ENCODE measurements at regions of chr3 and their contacts with region 1.

Region 1: DNA sequence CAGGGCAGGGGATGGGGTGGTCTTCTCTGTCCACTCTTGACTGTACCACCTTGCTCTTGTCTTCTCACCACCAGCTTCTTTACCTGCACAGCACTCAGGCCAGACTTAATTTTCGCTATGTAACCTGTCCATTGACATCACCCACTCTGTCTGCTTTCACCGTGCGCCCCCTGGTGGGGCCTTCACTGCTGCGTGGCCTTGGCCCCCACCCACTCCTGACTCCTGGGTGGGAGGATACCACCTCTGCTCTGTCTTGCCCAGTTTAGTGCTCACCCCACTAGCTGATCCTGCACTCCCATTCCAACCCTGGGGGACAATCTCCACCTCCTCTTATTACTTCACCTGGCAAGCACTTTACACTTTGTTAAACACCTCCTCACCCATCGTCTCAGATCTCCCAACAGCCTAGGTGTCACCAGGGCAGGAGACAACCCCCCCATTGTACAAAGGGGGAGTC is 17.7 kb downstream of the PTH1R start:
- DNase-seq: peak; percentile 78 to 94 (median 92)
- ATAC-seq: peak; percentile 20 to 33
- H3K4me3 ChIP-seq: no peak overlapping the region
- H3K27ac ChIP-seq: no peak overlapping the region
- H3K4me1 ChIP-seq: peaks cover 14% of the 10 kb centered on the region
- H3K27me3 ChIP-seq: no peaks in the 10 kb centered on the region

Region 2: GRCh38 chr3:46578973-46579755 is 316.1 kb before region 1 on chr3:
- intact Hi-C with region 1: no loop called
- DNase-seq: no peak
- ATAC-seq: peak; percentile 43 to 79
- H3K4me3 ChIP-seq: no peak overlapping the region
- H3K27ac ChIP-seq: no peak overlapping the region
- H3K4me1 ChIP-seq: no peaks in the 10 kb centered on the region
- H3K27me3 ChIP-seq: no peaks in the 10 kb centered on the region

Region 3: GRCh38 chr3:46845791-46846623 is 49.2 kb before region 1 on chr3:
- intact Hi-C with region 1: loop called in 1 of 4 experiments (anchors 5 kb)
- DNase-seq: peak; percentile 84 to 94 (median 93)
- ATAC-seq: peak; percentile 78 to 84
- H3K4me3 ChIP-seq: peak overlapping the region; percentile 38
- H3K27ac ChIP-seq: peak overlapping the region; percentile 22
- H3K4me1 ChIP-seq: no peaks in the 10 kb centered on the region
- H3K27me3 ChIP-seq: no peaks in the 10 kb centered on the region

Region 4: GRCh38 chr3:46860017-46860830 is 35.0 kb before region 1 on chr3:
- intact Hi-C with region 1: loop called in 2 of 4 experiments (anchors 5 kb)
- DNase-seq: peak; percentile 17 to 68 (median 58)
- ATAC-seq: no peak
- H3K4me3 ChIP-seq: no peak overlapping the region
- H3K27ac ChIP-seq: peak overlapping the region; percentile 25
- H3K4me1 ChIP-seq: peaks cover 4% of the 10 kb centered on the region
- H3K27me3 ChIP-seq: no peaks in the 10 kb centered on the region

Region 5: DNA sequence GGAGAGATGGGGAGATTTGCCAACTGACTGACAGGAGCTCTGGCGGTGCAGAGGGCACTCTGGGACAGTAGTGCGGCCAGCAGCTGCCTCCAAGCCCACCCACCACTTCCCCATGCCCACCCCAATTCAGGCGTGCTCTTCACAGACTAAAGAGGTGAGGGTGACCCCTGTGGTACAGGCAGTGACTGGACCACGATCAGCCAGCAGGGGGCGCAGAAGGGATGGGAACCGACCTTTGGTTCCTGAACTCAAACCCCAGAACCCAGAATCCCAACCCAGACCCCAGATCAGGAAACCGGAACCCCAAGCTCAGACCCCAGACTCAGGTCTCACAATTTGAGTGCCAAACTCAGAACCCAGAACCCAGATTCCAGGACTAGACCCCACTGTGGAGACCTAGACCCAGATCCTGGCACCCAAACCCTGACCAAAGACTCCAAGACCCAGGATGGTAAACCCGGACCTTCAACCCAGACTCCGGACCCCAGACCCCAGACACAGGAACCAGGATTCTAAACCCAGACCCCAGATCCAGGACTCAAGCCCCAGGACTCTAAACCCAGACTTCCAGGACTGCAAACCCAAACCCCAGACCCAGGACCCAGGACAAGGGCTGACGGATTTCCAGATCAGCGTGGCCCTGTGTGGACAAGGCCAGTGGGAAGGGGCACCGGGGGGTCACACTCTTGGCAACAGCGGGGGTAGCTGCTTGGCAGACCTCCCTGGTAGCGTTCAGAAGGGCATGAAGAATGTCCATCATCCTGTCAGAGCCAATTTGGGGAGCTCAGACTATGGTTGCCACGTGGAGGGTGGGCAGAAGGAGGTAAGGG is 28.3 kb before region 1 on chr3:
- intact Hi-C with region 1: loop called in 3 of 4 experiments (anchors 2 to 5 kb)
- DNase-seq: peak; percentile 89 to 97 (median 96)
- ATAC-seq: peak; percentile 32 to 67
- H3K4me3 ChIP-seq: no peak overlapping the region
- H3K27ac ChIP-seq: peak overlapping the region; percentile 60
- H3K4me1 ChIP-seq: peaks cover 25% of the 10 kb centered on the region
- H3K27me3 ChIP-seq: no peaks in the 10 kb centered on the region